ENCODE measurements at regions of chr3 and their contacts with region 1.

Region 1: DNA sequence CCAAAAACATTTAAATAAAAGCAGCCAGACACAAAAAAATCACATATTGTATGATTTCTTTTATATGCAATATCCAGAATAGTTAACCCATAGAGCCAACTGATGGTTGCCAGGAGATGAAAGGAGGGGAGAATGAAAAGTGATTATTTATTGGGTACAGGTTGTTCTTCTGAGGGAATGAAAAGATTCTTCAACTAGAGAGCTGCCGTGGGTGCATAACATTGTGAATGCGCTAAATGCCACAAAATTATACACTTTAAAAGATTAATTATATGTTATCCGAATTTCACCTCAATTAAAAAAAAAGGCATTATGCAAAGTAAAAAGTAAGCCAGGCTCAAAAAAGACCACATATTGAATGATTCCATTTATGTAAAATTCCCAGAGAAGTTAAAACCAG is 36.1 kb downstream of the PRKAR2A start:
- DNase-seq: no peak
- ATAC-seq: no peak
- H3K4me3 ChIP-seq: no peak overlapping the region
- H3K4me3 Mint-ChIP-seq: peak overlapping the region; percentile 65
- H3K27ac ChIP-seq: peak overlapping the region; percentile 83
- H3K27ac Mint-ChIP-seq: peak overlapping the region; percentile 90 to 95
- H3K4me1 ChIP-seq: peaks cover 20% of the 10 kb centered on the region
- H3K4me1 Mint-ChIP-seq: peaks cover 28 to 31% of the 10 kb centered on the region in 2 donors
- H3K27me3 ChIP-seq: no peaks in the 10 kb centered on the region
- H3K27me3 Mint-ChIP-seq: no peaks in the 10 kb centered on the region
- CTCF ChIP-seq: no peak

Region 2: DNA sequence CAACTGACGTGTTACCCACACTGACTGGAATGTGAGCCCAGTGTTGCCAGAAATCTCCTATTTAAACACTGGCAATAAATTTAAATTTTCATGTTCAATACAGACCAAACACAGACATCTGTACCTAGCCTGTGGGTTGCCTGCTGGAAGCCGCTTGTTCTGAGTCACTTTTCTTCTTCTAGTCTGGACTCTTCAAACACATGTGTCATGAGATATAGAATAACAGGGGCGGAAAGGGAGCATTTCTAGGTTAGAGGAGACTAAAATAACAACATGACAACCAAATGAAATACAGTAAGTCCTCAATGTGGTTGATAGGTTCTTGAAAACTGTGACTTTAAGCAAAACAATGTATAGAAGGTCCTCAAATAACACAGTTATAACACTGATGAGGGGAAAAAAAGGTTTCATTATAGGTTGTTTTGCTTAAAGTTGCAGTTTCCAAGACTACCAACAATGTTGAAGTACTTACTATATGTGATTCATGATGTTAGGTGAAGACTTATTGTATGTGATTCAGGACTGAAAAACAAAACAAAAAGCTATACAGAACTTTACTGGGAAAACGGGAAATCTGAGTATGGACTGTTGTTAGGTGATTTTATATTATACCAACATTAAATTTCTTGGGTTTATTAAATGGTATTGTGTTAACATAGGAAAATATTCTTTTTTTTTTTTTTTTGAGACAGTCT is 27.0 kb before region 1 on chr3:
- intact Hi-C with region 1: no loop called
- DNase-seq: no peak
- ATAC-seq: no peak
- H3K4me3 ChIP-seq: no peak overlapping the region
- H3K4me3 Mint-ChIP-seq: no peak overlapping the region
- H3K27ac ChIP-seq: no peak overlapping the region
- H3K27ac Mint-ChIP-seq: peak overlapping the region in 1 of 2 donors; percentile 37
- H3K4me1 ChIP-seq: peaks cover 7% of the 10 kb centered on the region
- H3K4me1 Mint-ChIP-seq: peaks cover 12% of the 10 kb centered on the region in 2 donors
- H3K27me3 ChIP-seq: no peaks in the 10 kb centered on the region
- H3K27me3 Mint-ChIP-seq: no peaks in the 10 kb centered on the region
- CTCF ChIP-seq: no peak

Region 3: DNA sequence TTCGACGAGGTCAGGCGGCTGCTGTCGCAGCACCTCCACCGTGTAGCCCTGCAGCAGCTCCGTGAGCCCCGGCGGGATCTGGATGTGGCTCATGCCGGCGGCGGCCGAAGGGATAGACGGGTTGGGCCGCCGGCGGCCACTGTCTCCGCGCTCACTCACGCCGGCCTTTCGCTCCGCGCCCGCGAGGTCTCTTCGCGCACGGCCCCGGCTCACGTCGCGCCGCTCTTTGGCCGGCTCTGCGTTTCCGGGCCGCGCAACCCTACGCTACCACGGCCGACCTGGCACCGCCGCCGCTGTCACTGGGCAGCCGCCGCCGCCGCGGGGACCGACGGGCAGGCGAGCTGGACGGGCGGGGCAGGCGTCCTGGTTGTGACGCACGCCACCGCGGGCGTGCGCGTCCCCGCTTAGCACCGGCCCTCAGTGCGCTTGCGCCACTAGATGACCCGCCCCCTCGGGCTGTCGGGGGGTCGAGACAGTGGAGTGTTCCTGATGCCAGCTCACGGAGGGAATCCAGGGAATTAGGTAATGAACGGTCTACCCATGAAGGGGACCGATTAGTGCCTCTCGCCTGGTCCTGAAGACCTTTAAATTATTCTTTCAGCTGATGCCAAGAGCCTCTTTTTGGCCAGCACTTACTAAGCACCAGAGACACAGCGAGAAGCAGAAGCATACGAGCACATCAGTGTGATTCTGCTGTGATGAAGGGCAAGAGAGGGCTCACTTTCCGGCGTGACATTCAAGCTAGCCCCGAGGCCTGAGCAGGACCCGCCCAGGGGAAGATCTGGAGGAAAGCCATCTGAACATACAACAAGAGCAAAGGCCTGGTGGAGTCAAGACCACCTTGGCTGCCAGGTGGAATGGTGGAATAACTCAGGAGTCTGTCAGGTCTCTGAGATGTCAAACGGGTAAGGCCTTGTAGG is 36.2 kb after region 1 on chr3 and contains the start of gene PRKAR2A:
- intact Hi-C with region 1: loop called (anchors 2 kb)
- DNase-seq: peak; percentile 88 to 92
- ATAC-seq: peak; percentile 89 to 95 (median 89)
- H3K4me3 ChIP-seq: peak within 1 kb of the TSS; percentile 86
- H3K4me3 Mint-ChIP-seq: peak within 1 kb of the TSS; percentile 91
- H3K27ac ChIP-seq: peak within 1 kb of the TSS; percentile 79
- H3K27ac Mint-ChIP-seq: peak within 1 kb of the TSS; percentile 98
- H3K4me1 ChIP-seq: peaks cover 27% of the 10 kb centered on the region
- H3K4me1 Mint-ChIP-seq: peaks cover 23 to 29% of the 10 kb centered on the region in 2 donors
- H3K27me3 ChIP-seq: no peaks in the 10 kb centered on the region
- H3K27me3 Mint-ChIP-seq: no peaks in the 10 kb centered on the region
- CTCF ChIP-seq: no peak
- total RNA-seq, gene PRKAR2A: 40.5 to 43.5 (median 42.7) TPM